Heart right ventricle (tissue), 16 donors: ENCODE measurements at regions of chrX and their contacts with region 1.

Region 1: GRCh38 chrX:98231003-98231402 is 1347.3 kb downstream of the RPA4 start:
- DNase-seq: no peak
- ATAC-seq: no peak
- H3K4me3 ChIP-seq: no peak overlapping the region
- H3K27ac ChIP-seq: no peak overlapping the region
- H3K4me1 ChIP-seq: no peaks in the 10 kb centered on the region
- H3K27me3 ChIP-seq: no peaks in the 10 kb centered on the region
- CTCF ChIP-seq: no peak

Region 2: DNA sequence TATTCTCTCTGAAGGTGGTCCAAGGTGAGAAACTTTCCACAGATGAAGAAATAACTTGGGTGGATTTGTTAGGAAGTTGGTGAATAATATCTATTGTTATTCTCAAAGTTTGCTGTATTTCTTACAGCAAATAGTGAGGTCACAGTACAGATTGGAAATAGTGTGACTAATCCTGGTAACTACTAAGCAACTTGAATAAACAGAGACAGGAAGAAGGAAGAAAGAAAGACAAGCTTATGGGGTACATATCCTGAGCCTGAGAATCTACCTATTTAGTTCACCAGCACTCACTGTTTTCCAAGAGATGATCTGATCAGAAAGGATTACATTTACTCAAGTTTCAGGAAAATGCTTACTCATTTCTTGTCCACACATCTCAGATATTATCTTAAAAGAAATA is 68.8 kb after region 1 on chrX:
- intact Hi-C with region 1: loop called in 1 of 10 experiments (anchors 10 kb)
- DNase-seq: no peak
- ATAC-seq: no peak
- H3K4me3 ChIP-seq: no peak overlapping the region
- H3K27ac ChIP-seq: no peak overlapping the region
- H3K4me1 ChIP-seq: no peaks in the 10 kb centered on the region
- H3K27me3 ChIP-seq: no peaks in the 10 kb centered on the region
- CTCF ChIP-seq: no peak